Endothelial cell of umbilical vein (primary cell): ENCODE measurements at regions of chr3 and their contacts with region 1.

Region 1: DNA sequence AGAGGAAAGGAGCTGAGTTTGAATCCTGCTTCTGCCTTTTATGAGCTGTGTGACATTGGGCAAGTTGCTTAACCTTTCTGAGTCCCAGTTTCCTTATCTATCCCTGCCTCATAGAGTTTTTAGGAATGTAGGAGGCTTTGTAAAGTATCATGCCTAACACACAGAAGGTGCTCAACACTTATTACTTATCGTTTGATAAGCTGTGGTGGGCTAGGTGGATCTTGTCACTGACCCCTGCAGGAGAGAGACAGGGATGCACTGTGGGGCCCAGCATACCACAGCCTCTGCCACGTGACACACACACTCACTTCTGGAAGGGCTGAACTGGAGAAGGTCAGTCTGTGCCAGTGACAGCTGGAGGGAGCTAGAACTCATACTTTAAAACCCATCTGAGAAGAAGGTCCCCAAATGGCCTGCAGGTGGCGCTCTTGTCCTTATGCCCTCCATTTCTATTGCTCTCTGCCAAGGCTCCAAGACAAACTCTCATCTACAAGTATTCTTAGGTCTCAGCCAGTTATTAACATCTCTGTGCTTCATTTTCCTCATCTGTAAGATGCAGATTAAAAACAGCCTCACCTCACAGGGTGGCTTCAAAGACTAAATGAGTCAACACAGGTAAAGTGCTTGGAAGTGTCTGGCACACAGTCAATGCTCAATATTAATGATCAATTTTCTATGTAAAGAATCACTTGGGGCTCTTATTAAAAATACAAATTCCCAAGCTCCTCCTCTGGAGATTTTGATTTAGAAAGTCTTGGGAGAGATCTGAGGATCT is 57.5 kb upstream of the HACD2 start:
- DNase-seq: peak; percentile 90
- H3K4me3 ChIP-seq: no peak overlapping the region
- H3K27ac ChIP-seq: no peak overlapping the region
- H3K4me1 ChIP-seq: no peaks in the 10 kb centered on the region
- H3K27me3 ChIP-seq: no peaks in the 10 kb centered on the region
- CTCF ChIP-seq: peak; percentile 85 to 97
- POLR2A ChIP-seq: no peak

Region 2: DNA sequence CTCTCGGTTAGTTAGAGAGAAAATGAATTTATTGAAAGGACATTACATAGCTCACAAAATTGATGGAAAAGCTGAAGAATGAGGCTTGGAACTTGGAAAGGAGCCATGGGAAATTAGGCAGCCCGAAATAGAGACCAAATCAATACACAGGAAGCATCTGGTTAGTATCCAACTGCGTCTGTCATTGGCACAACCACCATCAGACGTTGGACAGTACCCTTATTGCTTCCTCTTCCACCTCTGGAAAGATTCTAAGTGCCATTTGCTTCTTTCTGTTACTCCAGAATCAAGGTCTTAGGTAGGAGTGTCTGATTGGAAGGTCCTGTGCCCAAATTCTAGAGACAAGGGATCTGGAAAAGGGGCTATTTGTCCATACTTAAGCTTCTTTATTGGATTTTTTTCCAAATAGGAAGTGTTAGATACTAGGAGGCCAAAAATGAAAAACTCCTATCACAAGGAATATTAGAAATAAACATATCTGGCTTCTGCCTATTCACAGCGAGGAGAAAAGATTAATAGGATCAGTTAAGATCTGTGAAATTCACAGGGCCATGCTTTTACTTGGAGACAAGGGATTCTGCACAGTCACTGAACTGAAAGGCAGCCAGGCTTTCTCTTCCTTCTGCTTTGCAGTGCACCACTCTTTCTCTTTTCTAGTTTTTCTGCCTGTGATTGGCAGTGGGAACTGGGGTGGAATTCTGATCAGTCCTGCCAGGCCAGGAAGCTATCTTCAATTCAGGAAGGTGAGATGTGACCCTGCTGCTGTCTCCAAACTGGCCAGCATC is 46.8 kb before region 1 on chr3:
- CTCF ChIA-PET with region 1: no interaction called
- POLR2A ChIA-PET with region 1: no interaction called
- dilution Hi-C with region 1: no loop called
- intact Hi-C with region 1: no loop called
- DNase-seq: peak; percentile 21
- H3K4me3 ChIP-seq: no peak overlapping the region
- H3K27ac ChIP-seq: no peak overlapping the region
- H3K4me1 ChIP-seq: peaks cover 16% of the 10 kb centered on the region
- H3K27me3 ChIP-seq: no peaks in the 10 kb centered on the region
- CTCF ChIP-seq: no peak
- POLR2A ChIP-seq: no peak

Region 3: GRCh38 chr3:123618768-123619484 is 23.4 kb before region 1 on chr3:
- CTCF ChIA-PET with region 1: interaction called, 13 read pairs
- POLR2A ChIA-PET with region 1: no interaction called
- dilution Hi-C with region 1: no loop called
- intact Hi-C with region 1: no loop called
- DNase-seq: peak; percentile 48
- H3K4me3 ChIP-seq: no peak overlapping the region
- H3K27ac ChIP-seq: no peak overlapping the region
- H3K4me1 ChIP-seq: no peaks in the 10 kb centered on the region
- H3K27me3 ChIP-seq: no peaks in the 10 kb centered on the region
- CTCF ChIP-seq: no peak
- POLR2A ChIP-seq: no peak

Region 4: GRCh38 chr3:123652346-123652984 is 10.1 kb after region 1 on chr3:
- CTCF ChIA-PET with region 1: interaction called, 102 read pairs
- POLR2A ChIA-PET with region 1: no interaction called
- dilution Hi-C with region 1: no loop called
- intact Hi-C with region 1: no loop called
- DNase-seq: peak; percentile 75
- H3K4me3 ChIP-seq: no peak overlapping the region
- H3K27ac ChIP-seq: no peak overlapping the region
- H3K4me1 ChIP-seq: peaks cover 17% of the 10 kb centered on the region
- H3K27me3 ChIP-seq: no peaks in the 10 kb centered on the region
- CTCF ChIP-seq: peak; percentile 85 to 93
- POLR2A ChIP-seq: no peak

Region 5: DNA sequence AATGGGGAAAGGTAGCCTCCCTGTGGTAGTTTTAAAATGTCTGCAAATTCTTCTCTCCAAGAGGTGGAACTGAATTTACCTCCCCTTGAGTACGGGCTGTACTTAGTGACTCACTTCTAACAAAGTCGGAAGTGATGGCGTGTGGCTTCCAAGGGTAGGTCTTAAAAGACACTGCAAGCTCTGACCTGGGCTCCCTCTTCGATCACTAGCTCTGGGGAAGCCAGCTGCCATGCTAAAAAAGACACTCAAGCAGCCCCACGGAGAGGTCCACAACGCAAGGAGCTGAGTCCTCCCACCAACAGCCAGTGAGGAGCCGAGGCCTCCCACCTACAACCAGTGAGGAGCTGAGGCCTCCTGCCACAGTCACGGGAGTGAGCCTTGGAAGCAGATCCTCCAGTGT is 64.5 kb after region 1 on chr3:
- CTCF ChIA-PET with region 1: interaction called, 19 read pairs
- POLR2A ChIA-PET with region 1: no interaction called
- dilution Hi-C with region 1: no loop called
- intact Hi-C with region 1: no loop called
- DNase-seq: no peak
- H3K4me3 ChIP-seq: no peak overlapping the region
- H3K27ac ChIP-seq: no peak overlapping the region
- H3K4me1 ChIP-seq: no peaks in the 10 kb centered on the region
- H3K27me3 ChIP-seq: no peaks in the 10 kb centered on the region
- CTCF ChIP-seq: no peak
- POLR2A ChIP-seq: no peak

Region 6: DNA sequence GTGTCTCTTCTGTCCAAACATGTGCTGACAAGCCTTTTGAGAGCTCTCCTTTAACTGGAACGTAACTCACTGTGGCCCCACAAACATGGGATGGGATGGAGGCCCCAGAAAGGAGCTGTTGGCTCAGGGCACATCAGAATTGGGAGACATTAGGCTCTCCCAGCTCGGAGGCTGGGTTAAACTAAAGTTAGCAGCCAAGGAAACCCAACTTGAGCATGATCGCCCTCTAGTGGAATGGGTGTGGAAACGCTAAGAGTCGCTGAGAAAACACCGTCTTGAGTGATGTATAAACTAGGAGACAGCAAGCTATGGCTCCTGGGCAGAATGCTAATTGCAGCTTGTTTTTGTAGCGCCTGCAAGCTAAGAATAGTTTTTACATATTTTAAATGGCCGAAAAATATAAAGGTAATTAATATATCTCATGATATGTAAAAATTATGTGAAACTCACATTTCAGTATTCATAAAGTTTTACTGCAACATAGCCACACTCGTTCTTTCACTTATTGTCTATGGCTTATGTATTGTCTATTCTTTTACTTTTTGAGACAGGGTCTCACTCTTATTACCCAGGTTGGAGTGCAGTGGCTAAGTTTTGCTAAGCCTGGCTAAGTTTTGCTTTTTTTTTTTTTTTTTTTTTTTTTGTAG is 81.3 kb after region 1 on chr3:
- CTCF ChIA-PET with region 1: interaction called, 186 read pairs
- POLR2A ChIA-PET with region 1: no interaction called
- dilution Hi-C with region 1: no loop called
- intact Hi-C with region 1: loop called (anchors 1 kb)
- DNase-seq: peak; percentile 78
- H3K4me3 ChIP-seq: no peak overlapping the region
- H3K27ac ChIP-seq: no peak overlapping the region
- H3K4me1 ChIP-seq: no peaks in the 10 kb centered on the region
- H3K27me3 ChIP-seq: peaks cover 2 to 13% of the 10 kb centered on the region in 2 experiments
- CTCF ChIP-seq: peak; percentile 84
- POLR2A ChIP-seq: no peak